ENCODE measurements at regions of chr15 and their contacts with region 1.

Region 1: DNA sequence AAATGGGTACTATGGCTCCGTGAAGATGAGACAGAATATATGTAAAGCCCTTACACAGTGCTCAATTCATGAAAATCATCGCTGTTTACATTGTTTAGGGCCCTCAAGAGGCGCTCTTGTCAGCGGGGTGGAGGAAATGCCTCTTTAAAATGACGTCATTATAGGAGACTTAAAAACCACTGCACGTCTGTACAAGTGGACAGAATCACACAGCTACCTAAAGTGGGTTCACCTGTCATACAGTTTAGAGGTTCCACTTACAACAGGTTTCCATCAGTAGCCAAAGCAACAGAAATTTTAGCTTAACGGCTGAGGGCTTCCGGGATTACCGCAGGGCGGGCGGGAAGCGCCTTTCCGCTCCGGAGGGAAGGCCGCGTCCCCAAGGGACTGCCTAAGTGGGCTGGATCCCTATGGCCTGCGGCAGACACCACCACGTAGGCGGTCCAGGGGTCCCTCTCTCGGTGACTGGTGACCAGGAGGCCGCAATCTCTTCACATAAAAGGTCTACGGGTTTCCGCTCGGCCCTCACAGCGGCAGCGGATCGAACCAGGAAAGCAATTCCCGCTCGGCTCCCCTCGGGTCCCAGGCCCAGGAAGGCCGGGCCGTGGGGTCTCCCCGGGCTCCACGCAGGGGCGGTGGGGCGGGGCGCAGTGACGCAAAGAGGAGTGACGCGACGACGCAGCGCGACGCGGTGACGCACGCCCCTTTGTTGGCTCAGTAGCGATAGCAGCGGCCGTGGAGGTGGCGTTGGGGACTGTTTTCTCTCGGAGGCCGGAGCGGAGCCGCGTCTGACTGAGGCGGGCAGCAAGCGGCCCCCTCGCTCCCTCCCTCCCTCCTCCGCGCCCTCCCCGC is at the start of gene ARIH1:
- DNase-seq: peak; percentile 95 to 98
- H3K4me3 ChIP-seq: peak within 1 kb of the TSS; percentile 82 to 92
- H3K27ac ChIP-seq: peak within 1 kb of the TSS; percentile 94 to 100
- H3K4me1 ChIP-seq: peaks cover 0 to 46% (median 40%) of the 10 kb centered on the region in 4 donors
- H3K27me3 ChIP-seq: no peaks in the 10 kb centered on the region
- CTCF ChIP-seq: peak in 1 of 2 experiments; percentile 7

Region 2: GRCh38 chr15:72375847-72376581 is 97.8 kb before region 1 on chr15 and contains the start of gene HEXA:
- intact Hi-C with region 1: loop called (anchors 10 kb)
- DNase-seq: peak; percentile 96 to 98
- H3K4me3 ChIP-seq: peak within 1 kb of the TSS; percentile 68 to 79
- H3K27ac ChIP-seq: peak within 1 kb of the TSS; percentile 88 to 89
- H3K4me1 ChIP-seq: peaks cover 0 to 41% (median 21%) of the 10 kb centered on the region in 4 donors
- H3K27me3 ChIP-seq: no peaks in the 10 kb centered on the region
- CTCF ChIP-seq: peak in 1 of 2 experiments; percentile 28

Region 3: DNA sequence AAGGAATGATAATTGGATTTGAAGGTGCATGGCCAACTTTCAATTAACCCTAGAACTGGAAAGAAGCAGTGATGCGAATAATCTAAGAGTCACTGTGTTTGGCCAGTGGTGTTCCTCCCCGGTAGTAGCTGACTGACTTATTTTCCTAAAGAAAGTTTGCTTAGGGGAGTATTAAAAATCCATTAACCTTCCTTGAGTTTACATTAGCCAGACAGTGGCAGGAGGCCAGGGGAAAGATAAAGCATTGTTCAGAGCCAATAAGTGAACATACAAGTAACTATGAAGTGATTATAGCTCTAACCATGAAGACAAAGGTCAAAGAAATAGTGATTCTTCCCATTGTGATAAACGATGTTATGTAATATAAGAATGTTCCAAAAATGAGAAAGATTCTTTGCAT is 84.6 kb before region 1 on chr15:
- intact Hi-C with region 1: no loop called
- DNase-seq: no peak
- H3K4me3 ChIP-seq: no peak overlapping the region
- H3K27ac ChIP-seq: no peak overlapping the region
- H3K4me1 ChIP-seq: no peaks in the 10 kb centered on the region
- H3K27me3 ChIP-seq: peaks cover 0 to 18% of the 10 kb centered on the region in 2 donors
- CTCF ChIP-seq: no peak

Region 4: GRCh38 chr15:72437650-72438316 is 36.1 kb before region 1 on chr15:
- intact Hi-C with region 1: no loop called
- DNase-seq: no peak
- H3K4me3 ChIP-seq: no peak overlapping the region
- H3K27ac ChIP-seq: no peak overlapping the region
- H3K4me1 ChIP-seq: peaks cover 0 to 7% (median 0%) of the 10 kb centered on the region in 4 donors
- H3K27me3 ChIP-seq: no peaks in the 10 kb centered on the region
- CTCF ChIP-seq: no peak

Region 5: DNA sequence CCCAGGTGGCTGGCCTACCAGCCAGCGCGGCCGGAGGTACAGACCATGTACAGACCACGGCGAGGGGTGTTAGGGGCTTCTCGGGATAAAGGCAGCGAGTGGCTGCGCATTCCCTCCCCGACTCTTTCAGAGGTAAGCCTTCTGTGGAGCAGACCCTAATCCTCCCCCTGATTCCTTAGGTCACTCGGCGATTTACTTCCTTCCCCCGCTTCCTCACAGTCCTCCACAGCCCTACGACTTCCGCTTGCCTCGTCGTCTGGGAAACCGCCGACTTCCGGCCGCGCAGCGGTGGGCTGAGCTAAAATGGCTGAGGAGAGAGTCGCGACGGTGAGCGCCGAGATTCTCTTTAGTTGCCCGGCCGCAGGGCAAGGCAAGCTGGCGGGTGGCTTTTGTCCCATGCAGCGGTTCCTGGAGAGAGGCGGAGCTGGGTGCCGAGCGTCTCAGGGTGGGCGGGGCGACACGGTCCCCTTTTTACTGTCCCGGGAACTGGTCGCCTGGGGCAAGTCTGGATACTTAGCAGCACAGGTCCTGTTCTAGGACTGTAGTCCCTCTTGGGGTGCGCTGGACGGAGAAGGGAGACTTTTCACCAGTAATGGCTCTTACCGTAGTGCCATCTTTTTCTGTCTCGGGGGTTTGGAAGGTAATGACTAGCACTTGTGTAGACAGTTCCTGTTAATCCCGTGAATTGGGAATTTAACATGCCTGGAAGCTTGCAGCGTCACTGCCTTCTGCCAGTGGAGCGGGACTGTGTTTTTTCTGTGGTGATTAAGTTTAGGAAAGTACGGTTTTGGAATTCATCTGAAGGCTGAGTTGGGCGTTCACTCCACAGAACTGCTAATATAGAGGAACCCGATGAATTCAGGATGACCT is 212.3 kb after region 1 on chr15 and contains the starts of genes BBS4 and HIGD2B:
- intact Hi-C with region 1: loop called (anchors 5 kb)
- DNase-seq: peak; percentile 86 to 91
- H3K4me3 ChIP-seq: peak within 1 kb of the TSS; percentile 64
- H3K27ac ChIP-seq: peak within 1 kb of the TSS; percentile 87 to 93
- H3K4me1 ChIP-seq: peaks cover 0 to 15% (median 8%) of the 10 kb centered on the region in 4 donors
- H3K27me3 ChIP-seq: no peaks in the 10 kb centered on the region
- CTCF ChIP-seq: no peak

Measured in tibial artery (tissue), 4 donors.